ENCODE measurements at regions of chr11 and their contacts with region 1.

Region 1: GRCh38 chr11:113593698-113594308 is 112.3 kb downstream of the TMPRSS5 start:
- DNase-seq: peak; percentile 36
- H3K4me3 Mint-ChIP-seq: no peak overlapping the region
- H3K27ac Mint-ChIP-seq: peak overlapping the region; percentile 63
- H3K4me1 Mint-ChIP-seq: peaks cover 36% of the 10 kb centered on the region
- H3K27me3 Mint-ChIP-seq: peaks cover 26% of the 10 kb centered on the region

Region 2: DNA sequence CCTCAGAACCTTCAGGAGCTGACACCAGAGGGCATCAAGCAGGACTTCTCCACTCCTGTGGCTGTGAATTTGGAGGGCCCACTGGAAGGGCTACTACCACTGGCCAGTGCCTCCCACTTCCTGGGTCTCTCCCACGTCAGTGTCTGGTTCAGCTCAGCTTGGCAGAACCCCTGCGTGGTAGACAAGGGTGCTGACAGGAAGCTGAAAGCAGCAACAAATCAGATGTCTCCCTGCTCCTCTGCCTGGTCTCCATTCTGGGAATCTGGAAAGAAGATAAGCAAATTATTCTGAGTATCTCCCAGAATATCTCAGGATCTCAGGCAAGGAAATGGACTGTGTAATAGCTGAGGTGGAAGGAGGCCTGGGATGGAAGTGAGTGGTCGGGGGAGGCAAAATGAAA is 50.8 kb after region 1 on chr11:
- intact Hi-C with region 1: no loop called
- DNase-seq: no peak
- H3K4me3 Mint-ChIP-seq: no peak overlapping the region
- H3K27ac Mint-ChIP-seq: no peak overlapping the region
- H3K4me1 Mint-ChIP-seq: peaks cover 7% of the 10 kb centered on the region
- H3K27me3 Mint-ChIP-seq: no peaks in the 10 kb centered on the region

Region 3: GRCh38 chr11:113675003-113675561 is 81.3 kb after region 1 on chr11:
- intact Hi-C with region 1: loop called (anchors 2 kb)
- DNase-seq: no peak
- H3K4me3 Mint-ChIP-seq: no peak overlapping the region
- H3K27ac Mint-ChIP-seq: no peak overlapping the region
- H3K4me1 Mint-ChIP-seq: peaks cover 30% of the 10 kb centered on the region
- H3K27me3 Mint-ChIP-seq: no peaks in the 10 kb centered on the region

Region 4: GRCh38 chr11:113690619-113691569 is 97.1 kb after region 1 on chr11:
- intact Hi-C with region 1: no loop called
- DNase-seq: no peak
- H3K4me3 Mint-ChIP-seq: no peak overlapping the region
- H3K27ac Mint-ChIP-seq: no peak overlapping the region
- H3K4me1 Mint-ChIP-seq: peaks cover 18% of the 10 kb centered on the region
- H3K27me3 Mint-ChIP-seq: no peaks in the 10 kb centered on the region